Activated naive CD4-positive, alpha-beta T cell treated with anti-CD3 and anti-CD28 coated beads for 36 hours (primary cell): ENCODE measurements at regions of chr1 and their contacts with region 1.

Region 1: DNA sequence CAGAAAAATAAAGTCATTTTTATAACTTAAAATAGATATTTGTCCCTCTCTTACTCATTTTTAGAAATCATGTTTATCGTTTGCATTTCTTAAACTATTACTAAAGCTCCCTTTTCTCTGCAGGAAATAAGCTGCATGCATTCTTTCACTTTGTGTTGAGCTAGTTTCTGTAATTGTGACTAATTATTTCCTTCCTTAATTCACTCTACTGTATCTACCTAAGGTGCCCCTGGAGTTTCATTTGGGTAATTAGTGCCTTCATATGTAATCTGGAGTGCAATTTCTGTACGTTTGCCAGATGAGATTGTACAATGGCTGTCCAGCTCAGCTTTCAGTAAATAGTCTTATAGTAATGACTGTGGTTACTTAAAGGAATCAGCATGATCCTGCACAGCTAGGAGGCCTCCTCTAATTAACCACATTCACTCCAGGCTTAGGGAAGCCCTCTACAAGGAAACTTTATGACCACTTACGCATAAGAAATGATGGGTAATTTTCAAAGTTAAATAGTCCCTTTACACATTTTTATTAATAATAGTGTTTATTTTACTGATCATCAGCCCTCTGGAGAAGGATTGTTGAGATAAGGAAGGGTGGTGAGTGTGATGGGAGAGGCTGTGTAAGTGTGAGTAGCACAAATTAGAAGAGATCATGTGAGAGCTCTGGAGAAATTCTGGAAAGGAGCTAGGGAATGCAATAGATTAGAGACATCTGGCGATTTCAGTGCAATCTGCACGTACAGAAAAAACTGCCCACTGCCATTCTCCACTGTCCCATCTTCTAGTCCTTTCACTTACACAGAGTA is 86.8 kb downstream of the LRRC8C start:
- DNase-seq: peak; percentile 28
- H3K4me3 Mint-ChIP-seq: peak overlapping the region; percentile 26
- H3K27ac Mint-ChIP-seq: peak overlapping the region; percentile 95
- H3K4me1 Mint-ChIP-seq: peaks cover 86% of the 10 kb centered on the region
- H3K27me3 Mint-ChIP-seq: no peaks in the 10 kb centered on the region

Region 2: DNA sequence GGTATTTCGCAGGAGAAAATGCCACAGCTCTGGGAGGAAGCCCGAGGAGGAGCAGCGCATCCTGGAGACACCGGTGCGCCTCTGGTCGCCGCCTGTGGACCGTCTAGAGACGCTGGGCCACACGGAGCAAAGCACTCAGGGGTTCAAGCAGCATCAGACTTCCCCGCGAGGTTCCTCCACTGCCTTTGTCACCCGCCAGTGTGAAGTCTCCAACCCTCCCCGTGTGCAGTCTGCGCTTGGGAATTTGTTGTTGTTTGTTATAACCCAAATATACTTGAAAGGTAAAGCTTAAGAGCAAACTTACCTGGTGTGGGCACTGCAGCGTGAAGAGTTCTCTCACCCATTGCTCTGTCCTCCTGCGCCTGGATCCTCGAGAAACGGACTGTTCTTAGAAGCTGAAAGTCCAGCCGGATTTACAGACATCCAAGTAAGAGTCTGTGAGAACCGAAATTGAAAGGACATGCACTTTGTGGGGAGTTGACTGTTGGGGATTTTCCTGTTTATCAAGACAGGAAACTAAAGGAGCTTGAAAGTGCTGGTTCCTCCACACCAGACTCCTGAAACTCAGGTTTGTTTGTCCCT is 521.1 kb before region 1 on chr1 and contains the start of gene GBP4:
- CTCF ChIA-PET with region 1: no interaction called
- intact Hi-C with region 1: loop called (anchors 1 kb)
- DNase-seq: peak; percentile 65
- H3K4me3 Mint-ChIP-seq: peak within 1 kb of the TSS; percentile 92
- H3K27ac Mint-ChIP-seq: peak within 1 kb of the TSS; percentile 98
- H3K4me1 Mint-ChIP-seq: peaks cover 84% of the 10 kb centered on the region
- H3K27me3 Mint-ChIP-seq: no peaks in the 10 kb centered on the region
- total RNA-seq, gene GBP4: 22.9 to 23.2 TPM

Region 3: DNA sequence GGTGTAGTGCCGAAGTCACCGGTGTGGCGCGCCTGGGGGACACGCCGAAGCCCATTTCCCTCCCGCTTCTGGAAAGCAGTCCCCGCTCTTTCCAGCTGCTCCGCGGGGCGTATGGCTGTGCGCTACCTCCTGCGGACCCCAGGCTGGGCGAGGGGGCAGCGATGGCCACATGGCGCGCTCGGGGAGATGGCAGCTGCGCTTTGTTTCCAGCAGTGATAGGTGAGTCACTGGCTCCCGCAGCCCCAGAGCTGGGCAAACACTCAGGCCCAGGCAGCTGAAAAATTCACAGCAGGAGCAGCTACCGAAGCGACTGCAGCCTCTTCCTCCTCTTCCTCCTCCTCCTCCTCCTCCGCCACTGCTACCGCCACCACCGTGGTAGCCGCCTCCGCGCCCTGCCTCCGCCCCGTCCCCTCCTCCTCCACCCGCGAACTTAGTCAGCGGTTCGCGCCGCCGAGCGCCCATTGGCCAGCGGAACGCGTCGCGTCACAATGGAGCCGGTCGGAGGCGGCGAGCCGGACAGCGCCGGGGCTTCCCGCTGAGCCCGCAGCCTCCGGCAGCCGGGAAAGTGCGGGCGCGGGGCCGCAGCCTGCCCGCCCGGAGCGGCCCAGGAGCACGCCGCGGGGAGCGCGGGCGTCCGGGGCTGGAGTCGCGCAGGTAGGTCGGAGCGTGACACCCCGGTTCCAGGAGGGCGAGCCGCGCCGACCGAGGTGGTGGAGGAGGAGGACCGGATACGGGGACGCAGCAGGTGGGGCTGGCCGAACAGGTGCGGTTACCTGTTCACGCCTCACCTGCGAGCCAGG is 195.1 kb before region 1 on chr1 and contains the start of gene LRRC8B:
- CTCF ChIA-PET with region 1: interaction called, 3 read pairs
- intact Hi-C with region 1: loop called (anchors 1 kb)
- DNase-seq: peak; percentile 93
- H3K4me3 Mint-ChIP-seq: no peak within 1 kb of the TSS
- H3K27ac Mint-ChIP-seq: no peak within 1 kb of the TSS
- H3K4me1 Mint-ChIP-seq: peaks cover 34% of the 10 kb centered on the region
- H3K27me3 Mint-ChIP-seq: no peaks in the 10 kb centered on the region
- total RNA-seq, gene LRRC8B: 18.0 to 20.4 TPM

Region 4: DNA sequence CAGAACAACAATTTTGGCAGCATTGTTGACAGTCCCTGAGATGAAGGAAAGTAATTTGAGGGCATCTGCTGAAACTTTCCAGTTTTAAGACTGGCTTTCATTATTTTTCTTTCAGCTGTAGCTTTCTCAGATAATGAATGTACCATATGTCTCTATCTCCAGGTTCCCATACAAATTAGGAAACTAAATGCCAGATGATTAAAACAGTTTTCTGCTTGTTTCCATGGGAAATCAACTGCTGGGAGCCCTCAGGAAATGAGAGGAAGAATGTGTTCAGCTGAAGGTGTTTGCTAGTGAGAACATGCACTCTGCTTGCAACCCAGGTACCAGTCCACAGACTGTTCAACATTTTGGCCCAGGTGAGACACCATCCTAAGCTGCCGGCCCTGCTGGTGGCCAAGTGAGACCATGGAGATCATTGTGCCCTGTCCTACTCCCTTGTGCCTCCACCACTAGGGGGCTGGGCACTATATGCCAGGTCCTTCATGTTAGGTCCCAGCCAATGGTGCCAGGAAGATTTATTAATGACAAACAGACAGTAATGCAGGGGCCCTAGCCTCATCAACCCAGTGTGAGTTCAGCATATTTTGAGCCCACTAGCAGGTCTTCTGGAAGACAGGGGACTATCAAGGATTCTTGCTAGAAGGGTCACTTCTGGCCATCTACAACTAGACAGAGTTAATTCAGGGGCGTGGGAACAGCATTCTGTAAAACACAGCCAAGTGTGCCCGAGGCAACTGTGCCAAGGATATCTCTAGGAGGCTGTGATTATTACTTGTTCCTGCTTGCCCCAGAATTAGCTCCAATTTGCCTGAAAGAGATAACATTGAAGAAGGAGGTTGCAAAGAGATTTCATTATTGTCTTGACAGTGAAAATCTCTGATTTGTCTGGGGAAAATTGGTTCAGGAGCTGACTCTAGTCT is 103.8 kb before region 1 on chr1:
- CTCF ChIA-PET with region 1: interaction called, 9 read pairs
- intact Hi-C with region 1: loop called (anchors 1 kb)
- DNase-seq: no peak
- H3K4me3 Mint-ChIP-seq: no peak overlapping the region
- H3K27ac Mint-ChIP-seq: no peak overlapping the region
- H3K4me1 Mint-ChIP-seq: peaks cover 65% of the 10 kb centered on the region
- H3K27me3 Mint-ChIP-seq: no peaks in the 10 kb centered on the region

Region 5: GRCh38 chr1:89698624-89699023 is 21.1 kb before region 1 on chr1:
- CTCF ChIA-PET with region 1: interaction called, 5 read pairs
- intact Hi-C with region 1: loop called (anchors 1 kb)
- DNase-seq: no peak
- H3K4me3 Mint-ChIP-seq: no peak overlapping the region
- H3K27ac Mint-ChIP-seq: peak overlapping the region; percentile 88
- H3K4me1 Mint-ChIP-seq: peaks cover 83% of the 10 kb centered on the region
- H3K27me3 Mint-ChIP-seq: no peaks in the 10 kb centered on the region

Region 6: DNA sequence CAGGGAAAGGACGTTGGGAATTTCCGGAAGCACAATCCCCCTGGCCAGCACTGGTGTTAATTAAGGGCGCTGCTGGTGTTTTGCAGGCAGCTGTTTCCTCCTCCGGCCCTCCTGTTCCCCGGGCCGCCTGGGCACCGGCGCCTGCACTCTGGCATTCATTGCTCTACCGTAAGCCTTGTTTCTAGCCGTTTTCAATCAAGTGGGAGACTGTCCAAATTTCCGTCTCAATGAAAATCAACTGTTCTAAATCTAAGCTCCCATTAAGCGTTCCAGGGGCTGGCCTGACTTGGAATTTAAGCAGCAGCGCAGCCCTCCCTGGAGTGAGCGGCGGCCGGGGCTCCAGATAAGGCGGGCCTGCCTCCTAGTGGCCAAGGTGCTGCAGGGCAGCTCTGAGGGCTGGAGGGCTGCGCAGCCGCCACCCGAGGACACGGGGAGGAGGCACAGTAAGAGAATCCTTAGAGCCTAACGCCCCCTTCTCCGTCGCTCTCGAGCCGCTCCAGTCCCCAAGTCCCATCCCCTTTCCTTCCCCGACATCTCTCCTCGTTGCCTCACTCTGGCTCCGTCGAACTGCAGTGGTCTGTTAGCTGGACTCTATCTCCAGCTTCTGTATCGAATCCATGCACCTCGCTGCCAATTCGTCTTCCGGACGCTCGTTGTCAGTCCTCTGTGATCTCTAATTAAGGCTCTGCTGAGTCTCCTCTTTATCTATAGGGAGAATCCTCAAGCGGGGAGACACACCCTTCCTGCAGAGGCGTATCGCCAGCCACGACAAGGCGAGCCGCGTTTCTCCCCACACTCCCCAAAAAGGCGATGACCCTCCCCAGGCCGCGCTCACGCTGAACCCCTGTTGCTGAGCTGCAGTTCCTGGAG is 43.3 kb after region 1 on chr1:
- CTCF ChIA-PET with region 1: interaction called, 33 read pairs
- intact Hi-C with region 1: loop called (anchors 1 kb)
- DNase-seq: peak; percentile 92
- H3K4me3 Mint-ChIP-seq: peak overlapping the region; percentile 86
- H3K27ac Mint-ChIP-seq: peak overlapping the region; percentile 81
- H3K4me1 Mint-ChIP-seq: peaks cover 42% of the 10 kb centered on the region
- H3K27me3 Mint-ChIP-seq: no peaks in the 10 kb centered on the region

Region 7: DNA sequence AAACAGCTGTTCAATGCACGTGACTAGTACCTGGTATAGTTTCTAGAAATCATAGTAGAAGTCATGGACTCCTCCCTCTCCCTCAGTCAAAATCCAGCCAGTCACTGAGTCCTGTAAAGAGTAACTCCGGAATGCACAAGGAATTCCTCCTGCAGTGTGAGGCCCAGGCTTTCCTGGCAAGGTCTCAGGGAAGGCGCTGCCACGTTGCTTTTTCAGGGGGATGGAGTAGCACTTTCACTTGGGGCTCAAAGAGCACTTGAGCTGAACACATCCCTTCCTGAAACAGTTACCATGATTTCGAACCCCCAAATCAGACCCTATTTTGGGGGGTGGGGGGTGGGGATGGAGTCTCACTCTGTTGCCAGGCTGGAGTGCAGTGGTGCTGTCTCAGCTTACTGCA is 74.7 kb after region 1 on chr1:
- CTCF ChIA-PET with region 1: no interaction called
- intact Hi-C with region 1: no loop called
- DNase-seq: no peak
- H3K4me3 Mint-ChIP-seq: no peak overlapping the region
- H3K27ac Mint-ChIP-seq: no peak overlapping the region
- H3K4me1 Mint-ChIP-seq: no peaks in the 10 kb centered on the region
- H3K27me3 Mint-ChIP-seq: no peaks in the 10 kb centered on the region